ENCODE measurements at regions of chr19 and their contacts with region 1.

Region 1: DNA sequence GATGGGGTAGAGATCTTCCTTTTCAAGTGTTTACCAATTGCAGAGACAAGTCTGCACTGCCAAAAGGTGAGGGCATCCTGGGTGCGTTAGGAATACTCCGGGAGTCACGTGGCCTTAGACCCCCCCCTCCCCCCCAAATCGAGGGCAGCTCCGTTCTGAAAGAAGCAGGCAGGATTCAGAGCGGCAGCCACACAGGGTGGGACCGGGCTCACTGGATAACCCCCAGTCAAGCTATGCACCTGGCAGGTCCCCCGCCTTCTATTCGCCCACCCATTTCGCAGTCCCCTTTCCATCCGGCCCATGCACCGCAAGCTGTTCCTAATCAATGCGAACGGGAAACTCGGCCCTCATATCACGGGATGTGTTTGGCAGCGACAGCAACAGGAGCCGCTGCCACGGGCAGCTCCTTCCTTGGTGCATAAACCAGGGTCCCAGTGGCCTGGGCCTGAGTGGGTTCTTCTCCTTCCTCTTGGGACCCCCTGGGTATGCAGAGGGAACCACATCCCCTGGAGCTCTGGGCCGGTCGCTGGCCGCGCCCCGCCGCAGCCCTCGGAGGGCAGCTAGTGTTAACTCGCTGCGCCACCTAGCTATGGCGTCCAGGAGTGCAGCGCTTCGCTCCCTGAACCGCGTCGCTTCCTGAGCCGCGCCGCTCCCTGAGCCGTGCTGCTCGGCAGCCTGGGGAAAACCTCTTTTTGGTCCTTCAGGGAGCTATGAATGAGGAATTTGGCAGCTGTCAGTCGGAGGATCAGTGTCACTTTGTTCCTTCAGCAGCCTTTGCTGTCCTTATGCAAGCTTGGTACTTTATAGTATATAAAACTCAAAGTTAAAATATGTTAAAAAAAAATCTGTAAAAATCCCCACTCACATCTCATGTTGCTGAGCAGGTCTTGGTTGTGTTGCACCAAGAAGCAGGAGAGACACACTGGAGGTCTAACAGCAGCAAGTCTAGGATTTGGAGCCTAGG is 41.4 kb downstream of the LYL1 start:
- DNase-seq: peak; percentile 80 to 92 (median 89)
- H3K4me3 ChIP-seq: peak overlapping the region; percentile 38
- H3K27ac ChIP-seq: peak overlapping the region; percentile 37 to 51
- H3K4me1 ChIP-seq: peaks cover 67% of the 10 kb centered on the region
- H3K27me3 ChIP-seq: no peaks in the 10 kb centered on the region
- CTCF ChIP-seq: peak; percentile 69 to 97 (median 94)
- EP300 ChIP-seq: no peak
- POLR2A ChIP-seq: peak; percentile 40

Region 2: GRCh38 chr19:12913011-12913561 is 148.2 kb before region 1 on chr19:
- intact Hi-C with region 1: no loop called
- DNase-seq: peak; percentile 76 to 88 (median 79)
- H3K4me3 ChIP-seq: no peak overlapping the region
- H3K27ac ChIP-seq: peak overlapping the region in 1 of 2 donors; percentile 70
- H3K4me1 ChIP-seq: peaks cover 2% of the 10 kb centered on the region
- H3K27me3 ChIP-seq: no peaks in the 10 kb centered on the region
- CTCF ChIP-seq: no peak
- EP300 ChIP-seq: no peak
- POLR2A ChIP-seq: no peak

Region 3: GRCh38 chr19:12983542-12984142 is 77.6 kb before region 1 on chr19:
- intact Hi-C with region 1: loop called (anchors 2 to 5 kb)
- DNase-seq: peak; percentile 77 to 92 (median 87)
- H3K4me3 ChIP-seq: peak overlapping the region; percentile 28
- H3K27ac ChIP-seq: no peak overlapping the region
- H3K4me1 ChIP-seq: peaks cover 1% of the 10 kb centered on the region
- H3K27me3 ChIP-seq: no peaks in the 10 kb centered on the region
- CTCF ChIP-seq: peak; percentile 90 to 99 (median 99)
- EP300 ChIP-seq: no peak
- POLR2A ChIP-seq: peak; percentile 28

Region 4: GRCh38 chr19:13029893-13030292 is 31.4 kb before region 1 on chr19:
- intact Hi-C with region 1: loop called in 2 of 4 experiments (anchors 5 kb)
- DNase-seq: no peak
- H3K4me3 ChIP-seq: no peak overlapping the region
- H3K27ac ChIP-seq: no peak overlapping the region
- H3K4me1 ChIP-seq: peaks cover 44% of the 10 kb centered on the region
- H3K27me3 ChIP-seq: no peaks in the 10 kb centered on the region
- CTCF ChIP-seq: no peak
- EP300 ChIP-seq: no peak
- POLR2A ChIP-seq: no peak

Region 5: GRCh38 chr19:13104360-13104847 is 43.2 kb after region 1 on chr19:
- intact Hi-C with region 1: loop called in 1 of 4 experiments (anchors 5 kb)
- DNase-seq: peak; percentile 41 to 69 (median 59)
- H3K4me3 ChIP-seq: no peak overlapping the region
- H3K27ac ChIP-seq: peak overlapping the region in 1 of 2 donors; percentile 45
- H3K4me1 ChIP-seq: peaks cover 8% of the 10 kb centered on the region
- H3K27me3 ChIP-seq: no peaks in the 10 kb centered on the region
- CTCF ChIP-seq: peak in 2 of 3 donors; percentile 28 to 44
- EP300 ChIP-seq: no peak
- POLR2A ChIP-seq: no peak